Posterior vena cava (tissue), 2 donors: ENCODE measurements at regions of chr2 and their contacts with region 1.

Region 1: DNA sequence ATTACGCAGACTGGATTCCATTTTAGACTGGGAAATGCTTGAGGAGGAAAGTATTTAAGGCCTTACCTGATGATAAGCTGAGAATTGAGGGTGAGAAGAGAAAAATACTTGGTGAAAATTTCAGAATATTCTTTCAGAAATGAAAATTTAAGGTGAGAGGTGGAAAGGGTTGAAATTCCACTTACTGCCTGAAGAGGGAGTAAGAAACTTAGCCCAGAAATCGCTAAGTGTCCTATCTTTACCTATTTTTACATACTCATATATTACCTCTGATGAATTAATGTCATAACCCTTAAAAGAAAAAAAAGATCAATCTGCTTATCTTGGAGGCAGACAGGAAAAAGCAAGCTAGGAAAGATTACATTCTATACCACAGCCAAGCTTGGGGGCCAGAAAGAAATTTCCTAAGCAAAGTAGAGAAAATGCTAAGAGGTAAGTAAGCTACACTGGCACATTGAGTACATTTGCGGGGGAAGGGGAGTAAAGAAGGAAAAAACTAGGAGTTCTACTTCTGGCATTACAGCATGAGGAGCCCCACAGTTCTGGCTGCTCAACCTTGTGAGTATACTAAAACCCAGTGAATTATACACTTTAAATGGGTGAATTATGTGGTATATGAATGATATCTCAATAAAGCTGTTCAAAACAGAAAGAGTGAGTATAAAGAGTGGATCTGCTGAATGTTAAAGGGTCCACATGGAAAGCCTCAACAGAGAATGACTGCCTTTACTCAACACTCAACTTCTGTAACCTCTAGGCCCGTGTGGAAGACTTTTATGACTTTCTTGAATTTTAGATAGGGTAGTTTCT is 33.8 kb downstream of the SMC6 start:
- DNase-seq: no peak

Region 2: GRCh38 chr2:18378020-18378653 is 658.4 kb after region 1 on chr2:
- intact Hi-C with region 1: loop called in 1 of 2 experiments (anchors 10 kb)
- DNase-seq: no peak